K562 (cell line): ENCODE measurements at regions of chr7 and their contacts with region 1.

Region 1: GRCh38 chr7:107318523-107319160 is 149.8 kb downstream of the HBP1 start:
- DNase-seq: peak; percentile 66 to 92 (median 75)
- ATAC-seq: peak; percentile 97
- H3K4me3 ChIP-seq: no peak overlapping the region
- H3K27ac ChIP-seq: peak overlapping the region; percentile 62
- H3K4me1 ChIP-seq: peaks cover 13 to 30% of the 10 kb centered on the region in 2 experiments
- H3K27me3 ChIP-seq: no peaks in the 10 kb centered on the region
- CTCF ChIP-seq: no peak
- EP300 ChIP-seq: peak; percentile 89
- POLR2A ChIP-seq: 0 out of 2 replicates have a peak, but pooled peaks have one; percentile 29
- RAD21 ChIP-seq: no peak

Region 2: DNA sequence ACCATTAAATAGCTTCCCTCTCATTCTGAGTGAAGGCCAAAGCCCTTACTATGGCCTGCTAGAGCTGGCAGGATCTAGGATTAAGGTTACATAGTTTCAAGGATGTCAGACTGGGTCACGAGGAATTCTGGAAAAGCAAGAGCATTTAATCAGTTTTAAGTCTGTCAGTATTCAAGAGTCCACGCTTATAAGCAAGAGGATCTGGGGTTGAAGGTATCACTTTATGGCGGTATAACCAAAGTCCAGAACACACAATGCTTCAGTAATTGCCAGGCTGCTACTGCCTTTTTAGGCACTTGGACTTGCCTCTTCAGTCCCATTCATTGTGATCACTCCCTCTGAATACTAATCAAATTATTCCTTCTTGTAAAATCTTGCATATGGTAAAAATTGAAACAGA is 48.9 kb before region 1 on chr7:
- CTCF ChIA-PET with region 1: no interaction called
- POLR2A ChIA-PET with region 1: no interaction called
- in situ Hi-C with region 1: no loop called
- intact Hi-C with region 1: loop called (anchors 5 kb)
- DNase-seq: no peak
- ATAC-seq: no peak
- H3K4me3 ChIP-seq: no peak overlapping the region
- H3K27ac ChIP-seq: no peak overlapping the region
- H3K4me1 ChIP-seq: no peaks in the 10 kb centered on the region
- H3K27me3 ChIP-seq: no peaks in the 10 kb centered on the region
- CTCF ChIP-seq: no peak
- EP300 ChIP-seq: no peak
- POLR2A ChIP-seq: no peak
- RAD21 ChIP-seq: no peak

Region 3: GRCh38 chr7:107441581-107442422 is 123.2 kb after region 1 on chr7:
- CTCF ChIA-PET with region 1: no interaction called
- POLR2A ChIA-PET with region 1: no interaction called
- in situ Hi-C with region 1: no loop called
- intact Hi-C with region 1: no loop called
- DNase-seq: no peak
- ATAC-seq: no peak
- H3K4me3 ChIP-seq: no peak overlapping the region
- H3K27ac ChIP-seq: no peak overlapping the region
- H3K4me1 ChIP-seq: no peaks in the 10 kb centered on the region
- H3K27me3 ChIP-seq: no peaks in the 10 kb centered on the region
- CTCF ChIP-seq: no peak
- EP300 ChIP-seq: no peak
- POLR2A ChIP-seq: no peak
- RAD21 ChIP-seq: no peak